Activated CD8-positive, alpha-beta T cell treated with anti-CD3 and anti-CD28 coated beads, Interleukin-2, amount 10 ng/mL, durations not matched to agents 7 days and 5 days (primary cell): ENCODE measurements at regions of chr21 and their contacts with region 1.

Region 1: GRCh38 chr21:44304877-44305293 is 5.0 kb downstream of the PFKL start:
- DNase-seq: peak; percentile 55
- ATAC-seq: no peak
- H3K4me3 Mint-ChIP-seq: no peak overlapping the region
- H3K27ac Mint-ChIP-seq: peak overlapping the region; percentile 17
- H3K4me1 Mint-ChIP-seq: peaks cover 40% of the 10 kb centered on the region
- H3K27me3 Mint-ChIP-seq: no peaks in the 10 kb centered on the region

Region 2: GRCh38 chr21:44074311-44074958 is 230.4 kb before region 1 on chr21:
- CTCF ChIA-PET with region 1: no interaction called
- POLR2A ChIA-PET with region 1: interaction called, 10 read pairs
- DNase-seq: no peak
- ATAC-seq: no peak
- H3K4me3 Mint-ChIP-seq: no peak overlapping the region
- H3K27ac Mint-ChIP-seq: peak overlapping the region; percentile 22
- H3K4me1 Mint-ChIP-seq: peaks cover 45% of the 10 kb centered on the region
- H3K27me3 Mint-ChIP-seq: no peaks in the 10 kb centered on the region